MCF 10A (cell line): ENCODE measurements at regions of chr17 and their contacts with region 1.

Region 1: GRCh38 chr17:21482189-21482865 is 106.2 kb downstream of the KCNJ12 start:
- DNase-seq: no peak
- H3K4me3 Mint-ChIP-seq: no peak overlapping the region
- H3K27ac Mint-ChIP-seq: no peak overlapping the region
- H3K4me1 Mint-ChIP-seq: no peaks in the 10 kb centered on the region
- H3K27me3 Mint-ChIP-seq: peaks cover 99% of the 10 kb centered on the region
- CTCF ChIP-seq: no peak

Region 2: GRCh38 chr17:21457051-21458026 is 25.0 kb before region 1 on chr17:
- CTCF ChIA-PET with region 1: interaction called, 10 read pairs
- POLR2A ChIA-PET with region 1: no interaction called
- intact Hi-C with region 1: no loop called
- DNase-seq: peak; percentile 85
- H3K4me3 Mint-ChIP-seq: no peak overlapping the region
- H3K27ac Mint-ChIP-seq: no peak overlapping the region
- H3K4me1 Mint-ChIP-seq: peaks cover 5% of the 10 kb centered on the region
- H3K27me3 Mint-ChIP-seq: peaks cover 31% of the 10 kb centered on the region
- CTCF ChIP-seq: peak; percentile 95

Region 3: GRCh38 chr17:22337453-22337852 is 855.1 kb after region 1 on chr17:
- CTCF ChIA-PET with region 1: no interaction called
- POLR2A ChIA-PET with region 1: no interaction called
- intact Hi-C with region 1: no loop called
- DNase-seq: no peak
- H3K4me3 Mint-ChIP-seq: no peak overlapping the region
- H3K27ac Mint-ChIP-seq: no peak overlapping the region
- H3K4me1 Mint-ChIP-seq: no peaks in the 10 kb centered on the region
- H3K27me3 Mint-ChIP-seq: no peaks in the 10 kb centered on the region
- CTCF ChIP-seq: no peak